ENCODE measurements at regions of chr11 and their contacts with region 1.

Region 1: DNA sequence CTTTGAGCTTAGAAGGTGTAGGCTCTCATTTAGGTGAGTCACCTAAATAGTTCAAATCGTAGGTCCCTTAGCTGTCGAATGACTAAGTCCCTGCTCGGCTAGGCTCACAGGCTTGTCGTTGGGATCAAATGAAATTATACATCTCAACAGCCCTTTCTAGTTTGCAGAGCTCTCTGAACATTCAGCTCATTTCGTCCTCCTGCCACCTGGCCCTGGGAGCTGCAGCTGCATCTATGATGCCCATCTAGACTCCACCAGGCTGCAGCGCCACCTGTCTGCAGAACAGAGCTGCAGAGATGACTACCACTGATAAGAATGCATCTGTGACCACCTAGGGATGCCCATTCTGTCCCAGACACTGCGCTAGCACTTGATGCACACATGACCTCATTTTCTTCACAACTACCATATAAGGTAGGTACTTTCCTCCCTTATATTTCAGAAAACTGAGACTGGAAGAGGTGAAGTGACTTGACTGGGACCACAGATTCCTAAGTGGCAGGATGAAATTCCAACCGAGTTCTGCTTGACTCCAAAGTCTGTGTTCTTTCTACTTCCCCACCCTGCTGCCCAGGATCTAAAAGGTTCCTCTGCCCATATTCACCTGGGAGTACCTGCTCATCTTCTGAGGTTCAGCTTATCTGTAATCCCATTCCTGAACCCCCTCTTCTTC is 141.1 kb upstream of the NARS2 start:
- DNase-seq: peak; percentile 54
- H3K4me3 ChIP-seq: no peak overlapping the region
- H3K27ac ChIP-seq: peak overlapping the region; percentile 39
- H3K27me3 ChIP-seq: no peaks in the 10 kb centered on the region
- CTCF ChIP-seq: peak; percentile 81

Region 2: GRCh38 chr11:78298291-78298771 is 417.4 kb before region 1 on chr11:
- CTCF ChIA-PET with region 1: no interaction called
- POLR2A ChIA-PET with region 1: no interaction called
- DNase-seq: no peak
- H3K4me3 ChIP-seq: no peak overlapping the region
- H3K27ac ChIP-seq: no peak overlapping the region
- H3K27me3 ChIP-seq: no peaks in the 10 kb centered on the region
- CTCF ChIP-seq: no peak

Region 3: DNA sequence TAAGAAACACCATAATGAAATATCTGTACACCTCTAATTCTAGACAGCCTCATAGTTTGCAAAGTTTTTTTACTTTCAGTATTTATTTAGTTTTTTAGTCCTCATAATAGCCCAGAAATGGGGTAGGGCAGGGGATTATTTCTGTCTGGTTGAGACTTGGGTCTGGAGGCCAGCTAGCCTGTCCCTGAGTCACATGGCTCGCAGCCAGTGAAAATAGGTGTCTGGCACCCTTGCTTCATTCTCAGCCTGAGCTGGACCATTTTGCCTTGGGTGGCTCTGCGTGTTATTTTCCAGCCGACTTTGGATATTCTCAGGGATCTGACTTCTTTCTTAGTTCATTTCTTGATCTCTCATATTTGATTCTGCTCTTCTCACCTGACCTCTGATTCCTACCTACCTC is 17.2 kb before region 1 on chr11:
- CTCF ChIA-PET with region 1: interaction called, 17 read pairs
- POLR2A ChIA-PET with region 1: no interaction called
- DNase-seq: peak; percentile 6
- H3K4me3 ChIP-seq: no peak overlapping the region
- H3K27ac ChIP-seq: no peak overlapping the region
- H3K27me3 ChIP-seq: no peaks in the 10 kb centered on the region
- CTCF ChIP-seq: no peak

Region 4: GRCh38 chr11:78731027-78731426 is 15.3 kb after region 1 on chr11:
- CTCF ChIA-PET with region 1: interaction called, 26 read pairs
- POLR2A ChIA-PET with region 1: no interaction called
- DNase-seq: no peak
- H3K4me3 ChIP-seq: no peak overlapping the region
- H3K27ac ChIP-seq: no peak overlapping the region
- H3K27me3 ChIP-seq: no peaks in the 10 kb centered on the region
- CTCF ChIP-seq: no peak

Region 5: GRCh38 chr11:78737891-78738290 is 22.1 kb after region 1 on chr11:
- CTCF ChIA-PET with region 1: interaction called, 26 read pairs
- POLR2A ChIA-PET with region 1: no interaction called
- DNase-seq: peak; percentile 6
- H3K4me3 ChIP-seq: no peak overlapping the region
- H3K27ac ChIP-seq: no peak overlapping the region
- H3K27me3 ChIP-seq: no peaks in the 10 kb centered on the region
- CTCF ChIP-seq: no peak

Measured in AG04450 (cell line).